Gastrocnemius medialis (tissue), 4 donors: ENCODE measurements at regions of chr12 and their contacts with region 1.

Region 1: GRCh38 chr12:92551853-92552397 is 150.9 kb upstream of the PLEKHG7 start:
- DNase-seq: no peak
- ATAC-seq: no peak
- H3K4me3 ChIP-seq: no peak overlapping the region
- H3K27ac ChIP-seq: peak overlapping the region in 2 of 4 donors; percentile 70 to 74
- H3K4me1 ChIP-seq: peaks cover 3 to 20% of the 10 kb centered on the region in 2 donors
- H3K27me3 ChIP-seq: no peaks in the 10 kb centered on the region
- CTCF ChIP-seq: no peak
- POLR2A ChIP-seq: no peak

Region 2: DNA sequence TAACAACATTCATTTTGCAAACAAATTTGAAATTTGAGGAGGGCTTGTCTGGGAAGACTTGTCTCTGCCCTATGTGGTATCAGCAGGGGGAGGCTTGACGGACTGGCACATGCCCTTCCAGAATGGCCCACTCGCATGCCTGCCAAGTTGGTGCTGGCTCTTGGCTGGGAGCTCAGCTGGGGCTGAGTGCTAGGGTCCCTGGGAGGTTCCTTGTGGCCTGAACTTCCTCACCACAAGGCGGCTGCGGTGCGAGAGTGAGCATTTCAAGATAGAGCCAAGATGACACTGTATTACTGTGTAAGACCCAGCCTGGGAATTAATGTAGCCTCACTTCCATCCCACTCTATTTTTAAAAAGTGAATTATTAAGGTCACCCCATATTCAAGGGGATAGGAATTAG is 120.8 kb before region 1 on chr12:
- in situ Hi-C with region 1: no loop called
- intact Hi-C with region 1: loop called (anchors 10 kb)
- DNase-seq: no peak
- ATAC-seq: no peak
- H3K4me3 ChIP-seq: no peak overlapping the region
- H3K27ac ChIP-seq: no peak overlapping the region
- H3K4me1 ChIP-seq: no peaks in the 10 kb centered on the region
- H3K27me3 ChIP-seq: no peaks in the 10 kb centered on the region
- CTCF ChIP-seq: no peak
- POLR2A ChIP-seq: no peak

Region 3: GRCh38 chr12:92859650-92860386 is 307.9 kb after region 1 on chr12:
- in situ Hi-C with region 1: no loop called
- intact Hi-C with region 1: no loop called
- DNase-seq: no peak
- ATAC-seq: peak; percentile 46 to 61
- H3K4me3 ChIP-seq: no peak overlapping the region
- H3K27ac ChIP-seq: peak overlapping the region; percentile 41 to 61 (median 54)
- H3K4me1 ChIP-seq: peaks cover 4 to 8% of the 10 kb centered on the region in 2 donors
- H3K27me3 ChIP-seq: no peaks in the 10 kb centered on the region
- CTCF ChIP-seq: peak in 1 of 5 experiments; percentile 8
- POLR2A ChIP-seq: no peak